Sigmoid colon (tissue), 7 donors: ENCODE measurements at regions of chr1 and their contacts with region 1.

Region 1: GRCh38 chr1:53061859-53062707 is at the start of gene PODN:
- DNase-seq: peak; percentile 86
- H3K4me3 ChIP-seq: peak within 1 kb of the TSS; percentile 85 to 94 (median 89)
- H3K27ac ChIP-seq: peak within 1 kb of the TSS; percentile 72 to 85 (median 77)
- H3K4me1 ChIP-seq: peaks cover 0 to 67% (median 43%) of the 10 kb centered on the region in 4 donors
- H3K27me3 ChIP-seq: no peaks in the 10 kb centered on the region
- CTCF ChIP-seq: no peak
- EP300 ChIP-seq: no peak
- POLR2A ChIP-seq: no peak
- total RNA-seq, gene PODN: 67.6 to 200 (median 88.6) TPM

Region 2: DNA sequence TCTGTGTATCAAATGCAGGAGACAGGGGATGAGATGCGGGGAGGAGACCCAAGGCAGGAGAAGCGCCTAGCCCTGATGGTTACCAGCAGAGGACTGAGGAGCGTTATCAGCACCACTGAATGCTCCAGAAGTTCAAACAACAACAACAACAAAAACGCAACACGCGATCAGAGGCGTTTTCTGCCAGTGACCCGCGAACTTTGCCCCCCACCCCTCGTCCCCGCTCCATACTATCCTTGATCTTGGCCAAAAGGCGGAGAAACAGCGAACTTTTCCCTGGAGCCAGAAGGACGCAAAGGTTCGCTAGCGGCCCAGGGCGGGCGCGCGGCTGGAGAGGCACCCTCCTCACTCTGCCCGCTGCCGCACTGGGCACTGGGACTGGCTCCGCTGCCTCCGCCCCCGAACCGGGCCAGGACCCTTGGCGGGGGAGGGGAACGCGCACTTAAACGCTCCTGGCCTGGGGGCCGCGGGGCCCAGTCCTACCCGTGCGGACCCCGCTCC is 141.2 kb before region 1 on chr1:
- intact Hi-C with region 1: loop called (anchors 5 kb)
- DNase-seq: peak; percentile 73
- H3K4me3 ChIP-seq: peak overlapping the region; percentile 68 to 77 (median 70)
- H3K27ac ChIP-seq: peak overlapping the region; percentile 83 to 91 (median 87)
- H3K4me1 ChIP-seq: peaks cover 0 to 15% (median 7%) of the 10 kb centered on the region in 4 donors
- H3K27me3 ChIP-seq: no peaks in the 10 kb centered on the region
- CTCF ChIP-seq: no peak
- EP300 ChIP-seq: no peak
- POLR2A ChIP-seq: no peak

Region 3: GRCh38 chr1:53014791-53015507 is 47.1 kb before region 1 on chr1:
- intact Hi-C with region 1: loop called (anchors 2 kb)
- DNase-seq: peak; percentile 85
- H3K4me3 ChIP-seq: peak overlapping the region; percentile 37 to 55 (median 54)
- H3K27ac ChIP-seq: peak overlapping the region; percentile 44 to 73 (median 68)
- H3K4me1 ChIP-seq: peaks cover 0 to 27% (median 22%) of the 10 kb centered on the region in 4 donors
- H3K27me3 ChIP-seq: no peaks in the 10 kb centered on the region
- CTCF ChIP-seq: no peak
- EP300 ChIP-seq: no peak
- POLR2A ChIP-seq: no peak

Region 4: DNA sequence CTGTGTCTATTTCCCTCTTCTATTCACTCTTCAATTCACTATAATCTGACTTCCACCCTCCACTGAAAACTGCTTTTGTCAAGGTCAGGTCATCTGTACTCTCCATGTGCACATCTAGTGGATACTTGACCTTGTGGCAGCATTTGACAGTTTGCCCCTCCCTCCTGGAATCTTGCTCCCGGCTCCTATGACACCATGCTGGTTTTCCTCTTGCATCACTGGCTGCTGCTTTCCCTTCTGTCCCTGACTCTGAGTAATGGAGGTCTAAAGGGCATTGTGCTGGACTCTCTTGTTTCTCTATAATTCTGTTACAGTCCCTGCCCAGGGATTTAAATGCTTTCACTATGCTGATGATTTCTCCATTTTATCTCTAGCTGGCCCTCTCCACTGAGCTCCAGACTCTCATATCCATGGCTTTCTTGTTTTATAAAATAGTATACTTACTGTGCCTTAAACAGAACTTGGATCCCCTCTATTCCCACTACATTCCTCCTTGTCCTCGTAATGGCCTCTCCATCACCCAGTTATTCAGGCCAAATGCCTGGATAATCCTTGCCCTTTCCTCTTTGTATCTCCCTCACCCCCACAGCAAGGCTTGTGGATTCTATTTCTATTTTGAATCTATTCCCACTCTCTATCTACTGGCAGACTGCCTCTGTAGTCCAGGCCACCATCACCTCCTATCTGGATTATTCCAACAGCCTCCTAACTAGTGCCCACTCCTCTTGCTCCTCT is 36.9 kb before region 1 on chr1:
- intact Hi-C with region 1: loop called (anchors 5 kb)
- DNase-seq: peak; percentile 84
- H3K4me3 ChIP-seq: no peak overlapping the region
- H3K27ac ChIP-seq: peak overlapping the region; percentile 51 to 85 (median 75)
- H3K4me1 ChIP-seq: peaks cover 0 to 58% (median 31%) of the 10 kb centered on the region in 4 donors
- H3K27me3 ChIP-seq: no peaks in the 10 kb centered on the region
- CTCF ChIP-seq: no peak
- EP300 ChIP-seq: no peak
- POLR2A ChIP-seq: no peak

Region 5: GRCh38 chr1:53172426-53173128 is 110.5 kb after region 1 on chr1:
- intact Hi-C with region 1: loop called (anchors 2 kb)
- DNase-seq: no peak
- H3K4me3 ChIP-seq: no peak overlapping the region
- H3K27ac ChIP-seq: peak overlapping the region in 3 of 4 donors; percentile 0 to 59 (median 50)
- H3K4me1 ChIP-seq: peaks cover 0 to 42% (median 32%) of the 10 kb centered on the region in 4 donors
- H3K27me3 ChIP-seq: no peaks in the 10 kb centered on the region
- CTCF ChIP-seq: no peak
- EP300 ChIP-seq: no peak
- POLR2A ChIP-seq: no peak